ENCODE measurements at regions of chr5 and their contacts with region 1.

Region 1: DNA sequence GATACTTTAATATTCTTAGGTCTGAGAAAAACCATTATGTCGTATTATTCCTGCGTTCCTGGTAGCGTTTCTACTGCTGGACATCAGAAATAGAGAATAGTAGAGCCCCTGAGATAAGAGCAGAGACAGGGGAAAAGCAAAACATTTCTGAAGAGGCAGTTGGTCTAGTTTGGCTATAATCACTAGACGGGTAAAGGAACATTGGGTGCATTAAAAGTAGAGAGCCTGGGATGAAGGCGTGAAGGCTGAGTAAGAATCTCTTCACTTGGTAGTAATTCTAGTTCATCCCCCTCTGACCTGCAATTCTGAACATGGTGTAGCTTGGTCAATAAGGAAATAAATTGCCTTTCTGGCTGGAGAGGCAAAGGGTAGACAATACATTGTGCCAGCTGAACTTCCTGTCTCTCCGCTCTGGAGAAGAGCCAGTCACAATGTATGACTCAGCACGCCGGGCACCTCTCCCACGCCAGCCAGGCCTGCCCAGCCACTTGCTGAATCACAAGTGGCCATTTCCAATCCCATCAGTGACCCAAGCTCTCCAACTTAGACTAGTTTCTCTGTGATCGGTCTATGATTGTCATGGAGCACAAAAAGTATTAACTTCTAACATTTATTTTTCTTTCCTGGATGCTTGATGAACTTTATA is 75.4 kb downstream of the STK32A start:
- DNase-seq: peak; percentile 83

Region 2: DNA sequence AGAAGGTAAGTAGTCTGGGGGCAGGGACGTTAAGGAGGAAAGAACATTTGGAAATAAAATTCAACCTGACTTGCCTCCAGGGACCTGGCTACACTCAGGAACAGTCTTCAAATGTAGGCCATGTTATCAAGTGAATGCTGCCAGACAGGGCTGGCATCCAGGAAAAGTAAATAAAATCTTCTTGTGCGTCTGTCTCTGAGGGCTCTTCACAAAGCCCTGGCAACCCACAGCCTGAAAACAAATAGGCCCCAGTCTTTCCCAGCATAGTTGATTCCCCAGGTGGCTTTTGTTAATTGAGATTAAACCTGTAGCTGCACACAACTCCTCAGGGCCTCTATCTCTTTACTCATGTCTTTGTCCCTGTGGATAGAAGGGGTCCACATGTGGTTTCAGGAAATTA is 19.9 kb before region 1 on chr5:
- intact Hi-C with region 1: loop called in 1 of 2 experiments (anchors 1 kb)
- DNase-seq: no peak